ENCODE measurements at regions of chr11 and their contacts with region 1.

Region 1: GRCh38 chr11:14907411-14908213 is 15.6 kb upstream of the CYP2R1 start:
- DNase-seq: peak; percentile 86 to 92
- ATAC-seq: peak; percentile 63 to 80 (median 66)
- H3K4me3 ChIP-seq: no peak overlapping the region
- H3K4me3 Mint-ChIP-seq: no peak overlapping the region
- H3K27ac ChIP-seq: no peak overlapping the region
- H3K27ac Mint-ChIP-seq: peak overlapping the region in 1 of 2 donors; percentile 80
- H3K4me1 ChIP-seq: peaks cover 28% of the 10 kb centered on the region
- H3K4me1 Mint-ChIP-seq: peaks cover 37 to 38% of the 10 kb centered on the region in 2 donors
- H3K27me3 ChIP-seq: no peaks in the 10 kb centered on the region
- H3K27me3 Mint-ChIP-seq: peaks cover 0 to 16% of the 10 kb centered on the region in 2 donors
- CTCF ChIP-seq: peak; percentile 94

Region 2: GRCh38 chr11:14519917-14520746 is 387.5 kb before region 1 on chr11 and contains the start of gene PSMA1:
- intact Hi-C with region 1: loop called (anchors 1 kb)
- DNase-seq: peak; percentile 86 to 94
- ATAC-seq: peak; percentile 90 to 98 (median 94)
- H3K4me3 ChIP-seq: peak within 1 kb of the TSS; percentile 77
- H3K4me3 Mint-ChIP-seq: peak within 1 kb of the TSS; percentile 97
- H3K27ac ChIP-seq: peak within 1 kb of the TSS; percentile 87
- H3K27ac Mint-ChIP-seq: peak within 1 kb of the TSS; percentile 95 to 97
- H3K4me1 ChIP-seq: peaks cover 6% of the 10 kb centered on the region
- H3K4me1 Mint-ChIP-seq: peaks cover 26 to 28% of the 10 kb centered on the region in 2 donors
- H3K27me3 ChIP-seq: no peaks in the 10 kb centered on the region
- H3K27me3 Mint-ChIP-seq: no peaks in the 10 kb centered on the region
- CTCF ChIP-seq: no peak
- total RNA-seq, gene PSMA1: 143 to 176 (median 155) TPM

Region 3: GRCh38 chr11:14789879-14790484 is 117.6 kb before region 1 on chr11:
- intact Hi-C with region 1: loop called (anchors 1 kb)
- DNase-seq: peak in 1 of 2 donors; percentile 55
- ATAC-seq: peak in 1 of 3 donors; percentile 52
- H3K4me3 ChIP-seq: no peak overlapping the region
- H3K4me3 Mint-ChIP-seq: no peak overlapping the region
- H3K27ac ChIP-seq: no peak overlapping the region
- H3K27ac Mint-ChIP-seq: no peak overlapping the region
- H3K4me1 ChIP-seq: no peaks in the 10 kb centered on the region
- H3K4me1 Mint-ChIP-seq: no peaks in the 10 kb centered on the region
- H3K27me3 ChIP-seq: no peaks in the 10 kb centered on the region
- H3K27me3 Mint-ChIP-seq: no peaks in the 10 kb centered on the region
- CTCF ChIP-seq: peak; percentile 67

Region 4: GRCh38 chr11:14809466-14809865 is 98.1 kb before region 1 on chr11:
- intact Hi-C with region 1: no loop called
- DNase-seq: no peak
- ATAC-seq: peak in 1 of 3 donors; percentile 26
- H3K4me3 ChIP-seq: no peak overlapping the region
- H3K4me3 Mint-ChIP-seq: no peak overlapping the region
- H3K27ac ChIP-seq: no peak overlapping the region
- H3K27ac Mint-ChIP-seq: no peak overlapping the region
- H3K4me1 ChIP-seq: no peaks in the 10 kb centered on the region
- H3K4me1 Mint-ChIP-seq: no peaks in the 10 kb centered on the region
- H3K27me3 ChIP-seq: no peaks in the 10 kb centered on the region
- H3K27me3 Mint-ChIP-seq: no peaks in the 10 kb centered on the region
- CTCF ChIP-seq: no peak

Region 5: GRCh38 chr11:15006139-15006759 is 98.6 kb after region 1 on chr11:
- intact Hi-C with region 1: loop called (anchors 5 kb)
- DNase-seq: peak in 1 of 2 donors; percentile 60
- ATAC-seq: peak; percentile 54 to 64 (median 59)
- H3K4me3 ChIP-seq: no peak overlapping the region
- H3K4me3 Mint-ChIP-seq: no peak overlapping the region
- H3K27ac ChIP-seq: no peak overlapping the region
- H3K27ac Mint-ChIP-seq: no peak overlapping the region
- H3K4me1 ChIP-seq: no peaks in the 10 kb centered on the region
- H3K4me1 Mint-ChIP-seq: no peaks in the 10 kb centered on the region
- H3K27me3 ChIP-seq: peaks cover 29% of the 10 kb centered on the region
- H3K27me3 Mint-ChIP-seq: peaks cover 26 to 59% of the 10 kb centered on the region in 2 donors
- CTCF ChIP-seq: peak; percentile 47

Region 6: GRCh38 chr11:15208378-15209222 is 301.0 kb after region 1 on chr11:
- intact Hi-C with region 1: loop called (anchors 1 kb)
- DNase-seq: peak; percentile 68 to 83
- ATAC-seq: peak; percentile 79 to 98 (median 89)
- H3K4me3 ChIP-seq: no peak overlapping the region
- H3K4me3 Mint-ChIP-seq: no peak overlapping the region
- H3K27ac ChIP-seq: no peak overlapping the region
- H3K27ac Mint-ChIP-seq: no peak overlapping the region
- H3K4me1 ChIP-seq: no peaks in the 10 kb centered on the region
- H3K4me1 Mint-ChIP-seq: no peaks in the 10 kb centered on the region
- H3K27me3 ChIP-seq: no peaks in the 10 kb centered on the region
- H3K27me3 Mint-ChIP-seq: peaks cover 0 to 14% of the 10 kb centered on the region in 2 donors
- CTCF ChIP-seq: peak; percentile 84

Measured in natural killer cell (primary cell).